CD8-positive, alpha-beta T cell (primary cell): ENCODE measurements at regions of chr10 and their contacts with region 1.

Region 1: DNA sequence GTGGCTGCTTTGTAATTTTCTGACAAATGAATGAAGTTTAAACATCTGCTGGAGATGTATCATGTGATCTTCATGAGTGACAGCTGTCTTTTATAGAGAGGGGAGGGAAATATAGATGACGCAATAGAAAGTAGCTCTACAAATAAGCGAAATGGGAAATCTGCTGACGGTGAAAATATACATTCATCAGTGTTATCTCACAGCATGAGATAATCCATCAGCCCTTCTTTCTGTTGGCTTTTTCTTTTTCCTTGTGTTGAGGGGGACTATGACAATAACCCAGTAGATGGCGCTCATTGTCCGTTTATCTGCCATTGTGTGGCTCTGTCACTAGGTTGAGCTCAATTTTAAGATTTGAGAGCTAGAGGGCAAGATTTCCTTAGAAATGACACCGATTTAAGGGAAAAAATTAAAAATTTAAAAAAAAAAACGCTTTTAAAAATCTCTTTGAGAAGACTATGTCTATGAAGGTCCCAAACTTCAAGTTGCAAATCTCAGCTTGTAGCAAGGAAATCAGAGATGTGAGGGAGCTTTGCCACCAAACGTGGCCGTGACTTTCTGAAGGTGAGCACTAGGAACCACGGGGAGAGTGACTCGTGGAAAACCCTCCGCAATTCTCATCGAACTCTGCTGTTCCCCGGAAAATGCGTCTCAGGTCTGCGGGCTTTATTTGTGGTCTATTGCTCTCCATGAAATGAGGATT is 114.6 kb upstream of the SFMBT2 start:
- DNase-seq: peak; percentile 27 to 85 (median 59)
- ATAC-seq: peak; percentile 80
- H3K4me3 ChIP-seq: no peak overlapping the region
- H3K4me3 Mint-ChIP-seq: no peak overlapping the region
- H3K27ac ChIP-seq: no peak overlapping the region
- H3K27ac Mint-ChIP-seq: no peak overlapping the region
- H3K4me1 ChIP-seq: peaks cover 7% of the 10 kb centered on the region
- H3K4me1 Mint-ChIP-seq: peaks cover 22% of the 10 kb centered on the region
- H3K27me3 ChIP-seq: no peaks in the 10 kb centered on the region
- H3K27me3 Mint-ChIP-seq: no peaks in the 10 kb centered on the region
- CTCF ChIP-seq: peak; percentile 85

Region 2: DNA sequence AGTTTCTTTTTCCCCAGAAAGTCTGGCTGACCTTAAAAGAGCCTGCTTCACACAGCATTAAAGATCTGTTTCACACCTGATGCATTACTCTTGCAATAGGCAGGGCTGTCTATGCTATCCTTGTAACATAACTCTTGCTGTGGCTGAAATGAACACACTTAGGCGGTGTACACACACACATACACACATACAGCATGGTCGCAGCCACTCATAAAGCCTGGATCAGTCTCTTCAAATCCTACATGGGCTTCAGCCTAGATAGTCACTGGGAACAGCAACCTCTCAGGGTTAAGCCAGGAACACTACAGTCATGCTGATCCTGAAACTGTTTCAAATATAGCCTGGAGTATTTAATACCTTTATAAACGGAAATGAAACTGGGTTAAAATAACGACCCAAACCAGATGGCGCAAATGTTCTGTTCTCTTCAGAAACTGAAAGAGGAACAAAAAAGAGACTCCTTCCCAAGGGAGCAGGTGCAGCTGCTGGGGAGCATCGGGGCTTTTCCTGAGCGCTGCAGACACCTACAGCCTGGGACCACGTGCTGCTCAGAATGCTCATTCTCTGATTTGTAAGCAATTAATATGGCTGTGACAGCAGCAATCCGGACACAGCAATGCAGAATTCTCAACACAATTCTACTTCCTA is 53.6 kb before region 1 on chr10:
- CTCF ChIA-PET with region 1: interaction called, 7 read pairs
- POLR2A ChIA-PET with region 1: no interaction called
- intact Hi-C with region 1: loop called in 1 of 2 experiments (anchors 5 kb)
- DNase-seq: peak in 2 of 9 experiments; percentile 28 to 60
- ATAC-seq: peak; percentile 57
- H3K4me3 ChIP-seq: peak overlapping the region; percentile 33 to 36
- H3K4me3 Mint-ChIP-seq: peak overlapping the region; percentile 84
- H3K27ac ChIP-seq: peak overlapping the region in 1 of 2 experiments; percentile 58
- H3K27ac Mint-ChIP-seq: peak overlapping the region; percentile 88
- H3K4me1 ChIP-seq: peaks cover 12% of the 10 kb centered on the region
- H3K4me1 Mint-ChIP-seq: peaks cover 33% of the 10 kb centered on the region
- H3K27me3 ChIP-seq: no peaks in the 10 kb centered on the region
- H3K27me3 Mint-ChIP-seq: no peaks in the 10 kb centered on the region
- CTCF ChIP-seq: no peak

Region 3: GRCh38 chr10:7541137-7542095 is 16.0 kb after region 1 on chr10:
- CTCF ChIA-PET with region 1: interaction called, 11 read pairs
- POLR2A ChIA-PET with region 1: no interaction called
- intact Hi-C with region 1: no loop called
- DNase-seq: no peak
- ATAC-seq: no peak
- H3K4me3 ChIP-seq: no peak overlapping the region
- H3K4me3 Mint-ChIP-seq: no peak overlapping the region
- H3K27ac ChIP-seq: no peak overlapping the region
- H3K27ac Mint-ChIP-seq: no peak overlapping the region
- H3K4me1 ChIP-seq: peaks cover 11% of the 10 kb centered on the region
- H3K4me1 Mint-ChIP-seq: peaks cover 13% of the 10 kb centered on the region
- H3K27me3 ChIP-seq: no peaks in the 10 kb centered on the region
- H3K27me3 Mint-ChIP-seq: no peaks in the 10 kb centered on the region
- CTCF ChIP-seq: no peak

Region 4: DNA sequence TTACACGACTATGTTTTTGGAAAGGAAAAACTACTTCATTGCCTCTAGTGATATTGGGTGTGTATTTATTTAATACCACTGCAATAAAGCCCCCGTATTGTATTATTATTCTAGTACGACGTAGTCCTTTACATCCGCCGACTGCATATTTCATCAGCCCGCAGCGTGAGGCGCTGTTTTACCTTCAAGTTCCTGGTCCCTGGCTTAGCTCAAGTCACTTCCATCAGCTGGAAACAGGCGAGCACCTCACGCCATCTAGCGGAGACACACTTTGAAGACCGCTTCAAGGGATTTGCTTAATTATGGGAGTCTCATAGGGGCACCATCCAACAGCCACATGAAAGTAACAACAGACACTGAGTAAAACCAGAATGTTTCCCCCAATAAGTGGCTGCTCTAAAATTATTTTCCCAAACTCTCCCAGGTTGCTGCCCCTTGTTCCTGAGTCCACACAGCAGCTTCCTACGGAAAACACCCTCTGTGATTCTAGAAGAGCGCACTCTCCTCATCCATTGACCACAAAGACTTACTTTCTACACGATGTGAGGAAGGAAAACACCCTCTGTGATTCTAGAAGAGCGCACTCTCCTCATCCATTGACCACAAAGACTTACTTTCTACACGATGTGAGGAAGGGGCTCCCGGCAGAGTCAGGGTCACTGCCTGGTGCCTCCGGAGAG is 161.9 kb after region 1 on chr10:
- CTCF ChIA-PET with region 1: interaction called, 143 read pairs
- POLR2A ChIA-PET with region 1: interaction called, 10 read pairs
- intact Hi-C with region 1: loop called in 1 of 2 experiments (anchors 1 kb)
- DNase-seq: peak; percentile 55 to 89 (median 72)
- ATAC-seq: peak; percentile 94
- H3K4me3 ChIP-seq: no peak overlapping the region
- H3K4me3 Mint-ChIP-seq: no peak overlapping the region
- H3K27ac ChIP-seq: no peak overlapping the region
- H3K27ac Mint-ChIP-seq: no peak overlapping the region
- H3K4me1 ChIP-seq: no peaks in the 10 kb centered on the region
- H3K4me1 Mint-ChIP-seq: peaks cover 4% of the 10 kb centered on the region
- H3K27me3 ChIP-seq: no peaks in the 10 kb centered on the region
- H3K27me3 Mint-ChIP-seq: peaks cover 4% of the 10 kb centered on the region
- CTCF ChIP-seq: peak; percentile 69

Region 5: GRCh38 chr10:7818295-7819122 is 293.0 kb after region 1 on chr10 and contains the start of gene TAF3:
- CTCF ChIA-PET with region 1: no interaction called
- POLR2A ChIA-PET with region 1: no interaction called
- intact Hi-C with region 1: no loop called
- DNase-seq: peak; percentile 88 to 95 (median 92)
- ATAC-seq: peak; percentile 92
- H3K4me3 ChIP-seq: peak within 1 kb of the TSS; percentile 93 to 99
- H3K4me3 Mint-ChIP-seq: peak within 1 kb of the TSS; percentile 98
- H3K27ac ChIP-seq: peak within 1 kb of the TSS; percentile 64 to 70
- H3K27ac Mint-ChIP-seq: peak within 1 kb of the TSS; percentile 91
- H3K4me1 ChIP-seq: peaks cover 25% of the 10 kb centered on the region
- H3K4me1 Mint-ChIP-seq: peaks cover 44% of the 10 kb centered on the region
- H3K27me3 ChIP-seq: no peaks in the 10 kb centered on the region
- H3K27me3 Mint-ChIP-seq: no peaks in the 10 kb centered on the region
- CTCF ChIP-seq: no peak
- total RNA-seq, gene TAF3: 12.1 to 12.4 TPM

Region 6: DNA sequence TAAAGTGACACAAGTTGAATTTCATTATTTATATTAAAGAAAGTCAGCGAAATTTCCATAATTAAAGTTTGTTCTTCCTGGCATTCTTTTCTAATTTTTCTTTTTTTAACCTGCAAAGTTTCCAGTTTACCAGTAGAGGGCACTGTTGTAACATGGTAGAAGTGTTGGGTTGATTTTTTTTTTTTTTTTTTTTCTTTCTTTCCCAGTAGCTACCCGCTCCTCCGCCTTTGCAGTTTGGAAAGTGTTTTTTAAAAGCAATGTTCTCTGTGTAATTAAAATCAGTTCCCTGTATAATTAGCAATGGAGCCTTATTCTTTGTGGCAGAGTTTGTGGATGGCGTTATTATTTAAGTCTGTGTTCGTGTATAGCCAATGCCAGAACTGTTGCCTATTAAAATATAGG is 346.6 kb after region 1 on chr10:
- CTCF ChIA-PET with region 1: no interaction called
- POLR2A ChIA-PET with region 1: no interaction called
- intact Hi-C with region 1: loop called (anchors 5 kb)
- DNase-seq: peak in 2 of 9 experiments; percentile 40 to 54
- ATAC-seq: no peak
- H3K4me3 ChIP-seq: no peak overlapping the region
- H3K4me3 Mint-ChIP-seq: peak overlapping the region; percentile 56
- H3K27ac ChIP-seq: no peak overlapping the region
- H3K27ac Mint-ChIP-seq: no peak overlapping the region
- H3K4me1 ChIP-seq: no peaks in the 10 kb centered on the region
- H3K4me1 Mint-ChIP-seq: peaks cover 26% of the 10 kb centered on the region
- H3K27me3 ChIP-seq: no peaks in the 10 kb centered on the region
- H3K27me3 Mint-ChIP-seq: no peaks in the 10 kb centered on the region
- CTCF ChIP-seq: peak; percentile 98

Region 7: DNA sequence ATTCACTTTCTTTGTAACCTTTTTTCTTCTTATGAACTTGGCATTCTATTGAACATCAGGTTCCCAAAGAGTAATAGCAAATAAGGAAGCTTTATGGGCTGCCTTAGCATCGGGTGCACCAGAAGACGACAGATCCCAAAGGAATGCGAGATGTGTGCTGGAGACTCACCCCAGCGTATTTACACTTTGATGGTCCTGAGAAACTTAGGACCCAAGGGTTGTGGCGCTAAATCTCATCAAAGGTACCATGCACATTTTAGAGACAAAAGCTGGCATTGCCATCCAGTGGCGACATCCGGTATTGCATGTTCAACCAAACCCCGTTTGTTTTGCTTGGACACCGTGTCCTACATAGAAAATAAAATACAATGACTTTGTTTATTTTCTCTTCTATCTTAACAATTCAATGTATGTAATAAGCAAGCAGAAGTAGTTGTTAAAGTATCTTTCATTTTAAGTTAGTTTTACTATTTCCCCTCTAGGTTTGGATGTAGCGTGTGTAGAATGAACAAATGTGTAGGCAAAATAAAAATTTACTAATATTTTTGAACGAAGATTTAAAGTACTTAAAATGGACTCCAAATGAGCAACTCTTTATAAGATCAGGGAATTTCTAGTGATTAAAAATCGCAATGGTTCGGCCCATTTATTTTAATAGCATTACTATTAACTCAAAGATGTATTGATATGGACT is 1683.8 kb after region 1 on chr10:
- CTCF ChIA-PET with region 1: interaction called, 8 read pairs
- POLR2A ChIA-PET with region 1: no interaction called
- intact Hi-C with region 1: loop called (anchors 2 to 5 kb)
- DNase-seq: peak; percentile 51 to 84 (median 69)
- ATAC-seq: peak; percentile 64
- H3K4me3 ChIP-seq: no peak overlapping the region
- H3K4me3 Mint-ChIP-seq: no peak overlapping the region
- H3K27ac ChIP-seq: no peak overlapping the region
- H3K27ac Mint-ChIP-seq: no peak overlapping the region
- H3K4me1 ChIP-seq: peaks cover 6% of the 10 kb centered on the region
- H3K4me1 Mint-ChIP-seq: peaks cover 5% of the 10 kb centered on the region
- H3K27me3 ChIP-seq: no peaks in the 10 kb centered on the region
- H3K27me3 Mint-ChIP-seq: peaks cover 6% of the 10 kb centered on the region
- CTCF ChIP-seq: peak; percentile 96